Dorsolateral prefrontal cortex (tissue), 120 donors: ENCODE measurements at regions of chrX and their contacts with region 1.

Region 1: GRCh38 chrX:130120746-130121504 is 10.6 kb upstream of the ELF4 start:
- DNase-seq: peak in 8 of 10 donors; percentile 37 to 73 (median 52)
- H3K4me3 ChIP-seq: peak overlapping the region; percentile 22 to 67 (median 49)
- H3K27ac ChIP-seq: peak overlapping the region in 17 of 59 donors; percentile 1 to 65 (median 48)
- H3K27me3 ChIP-seq: peaks cover 0 to 82% (median 18%) of the 10 kb centered on the region in 45 donors
- CTCF ChIP-seq: peak; percentile 28 to 75 (median 62)

Region 2: DNA sequence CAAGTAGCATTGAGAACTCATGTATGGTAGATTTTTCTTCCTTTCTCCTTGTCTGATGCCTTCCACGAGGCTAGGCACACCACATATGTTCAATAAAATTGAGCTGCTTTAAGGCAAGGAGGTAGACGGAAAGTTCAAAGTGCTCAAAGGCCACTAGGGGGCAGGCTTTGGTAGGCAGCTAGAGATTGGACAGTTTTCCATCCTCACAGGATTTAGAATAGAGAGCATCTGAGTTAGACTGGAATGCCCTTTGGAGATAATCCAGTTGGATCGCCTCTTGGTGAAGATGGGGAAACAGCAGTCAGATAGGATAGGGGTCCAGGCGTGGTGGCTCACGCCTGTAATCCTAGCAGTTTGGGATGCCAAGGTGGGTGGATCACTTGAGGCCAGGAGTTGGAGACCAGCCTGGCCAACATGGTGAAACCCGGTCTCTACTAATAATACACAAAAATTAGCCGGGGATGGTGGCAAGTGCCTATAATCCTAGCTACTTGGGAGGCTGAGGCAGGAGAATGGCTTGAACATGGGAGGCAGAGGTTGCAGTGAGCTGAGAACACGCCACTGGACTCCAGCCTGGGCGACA is 41.0 kb before region 1 on chrX:
- intact Hi-C with region 1: loop called in 1 of 2 experiments (anchors 5 kb)
- DNase-seq: peak in 8 of 10 donors; percentile 30 to 61 (median 58)
- H3K4me3 ChIP-seq: no peak overlapping the region
- H3K27ac ChIP-seq: no peak overlapping the region
- H3K27me3 ChIP-seq: peaks cover 0 to 56% (median 8%) of the 10 kb centered on the region in 45 donors
- CTCF ChIP-seq: peak; percentile 47 to 84 (median 74)

Region 3: DNA sequence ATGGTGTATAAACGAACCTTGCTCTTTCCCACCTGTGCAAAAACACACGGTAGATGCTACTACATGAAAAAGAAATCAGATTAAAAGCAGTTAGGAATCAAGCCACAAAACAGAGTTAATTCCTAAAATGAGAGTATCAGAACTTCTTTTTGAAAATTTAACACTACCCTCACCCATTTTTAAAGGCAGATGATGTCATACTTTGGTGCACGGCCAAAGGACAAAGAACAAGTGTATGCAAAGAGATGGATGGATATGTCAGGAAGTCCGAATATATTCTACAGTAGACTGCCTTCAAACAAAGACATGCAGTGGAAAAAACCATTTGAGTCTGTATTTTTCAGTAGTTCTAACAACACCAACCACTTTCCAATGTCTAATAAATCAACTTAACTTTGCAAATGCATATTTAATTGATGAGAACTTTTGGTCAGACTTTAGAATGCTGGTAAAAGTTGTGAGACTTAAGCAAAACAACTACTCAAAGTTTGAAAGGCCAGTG is 42.5 kb after region 1 on chrX:
- intact Hi-C with region 1: loop called in 1 of 2 experiments (anchors 5 kb)
- DNase-seq: no peak
- H3K4me3 ChIP-seq: no peak overlapping the region
- H3K27ac ChIP-seq: no peak overlapping the region
- H3K27me3 ChIP-seq: peaks cover 0 to 34% (median 3%) of the 10 kb centered on the region in 45 donors
- CTCF ChIP-seq: no peak

Region 4: DNA sequence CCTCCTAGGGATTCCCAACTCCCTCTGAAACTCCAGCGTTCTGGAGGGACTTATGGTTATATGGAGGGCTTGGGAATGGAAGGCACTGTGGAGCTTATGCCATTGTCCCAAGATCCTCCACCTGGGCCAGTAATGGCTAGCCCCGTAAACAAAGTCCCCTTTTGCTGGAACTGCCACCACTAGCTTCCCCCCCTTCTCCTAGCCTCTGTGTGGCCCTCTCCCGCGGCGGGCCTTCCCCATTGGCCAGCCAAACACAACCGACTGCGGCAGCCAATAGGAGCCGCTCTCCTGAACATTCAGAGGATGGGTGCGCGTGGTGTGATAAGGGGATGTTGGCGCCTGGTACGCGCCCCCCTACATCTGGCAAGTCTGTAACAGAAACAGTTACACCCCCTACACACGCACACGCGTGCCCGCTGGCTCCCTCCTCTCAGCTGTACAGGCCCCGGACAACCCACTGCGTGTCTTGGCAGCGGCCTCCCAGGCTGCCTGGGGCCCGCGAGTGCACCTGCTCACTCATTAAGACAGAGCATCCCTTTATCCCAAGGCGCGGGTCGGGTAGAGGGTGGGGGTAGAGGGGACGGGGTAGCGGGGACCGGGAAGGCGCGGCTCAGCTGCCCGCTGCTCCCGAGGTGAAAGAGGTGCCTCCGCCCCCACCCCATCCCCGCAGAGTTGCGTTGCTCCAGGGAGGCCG is 50.0 kb after region 1 on chrX:
- intact Hi-C with region 1: loop called in 1 of 2 experiments (anchors 5 kb)
- DNase-seq: peak; percentile 73 to 94 (median 89)
- H3K4me3 ChIP-seq: peak overlapping the region; percentile 34 to 78 (median 64)
- H3K27ac ChIP-seq: peak overlapping the region; percentile 18 to 98 (median 93)
- H3K27me3 ChIP-seq: peaks cover 0 to 53% (median 4%) of the 10 kb centered on the region in 45 donors
- CTCF ChIP-seq: peak in 3 of 56 donors; percentile 7 to 23 (median 13)